Activated CD8-positive, alpha-beta T cell treated with anti-CD3 and anti-CD28 coated beads, Interleukin-2, amount 10 ng/mL, durations not matched to agents 7 days and 5 days (primary cell): ENCODE measurements at regions of chr18 and their contacts with region 1.

Region 1: DNA sequence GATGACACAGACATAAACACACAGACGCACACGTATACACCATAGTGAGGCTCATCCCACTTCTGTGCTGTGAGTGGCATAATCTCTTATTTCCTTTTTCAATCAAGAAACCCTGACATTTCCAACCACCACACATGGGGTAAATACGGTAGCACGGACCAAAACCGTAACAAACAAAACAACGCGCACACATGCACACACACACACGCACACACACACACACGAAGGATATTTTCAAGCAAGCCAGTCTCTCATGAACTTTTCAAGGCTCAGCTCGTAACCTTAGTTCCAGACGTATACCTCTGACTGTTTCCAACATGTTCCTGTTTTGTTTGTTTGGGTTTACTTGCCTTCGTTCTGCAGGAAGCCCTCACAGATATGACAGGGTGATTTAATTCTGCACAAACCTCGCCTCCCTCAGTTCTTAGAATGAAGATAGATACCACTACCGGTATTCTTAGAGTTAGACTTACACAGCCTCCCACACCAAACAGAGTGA is 119.8 kb downstream of the BCL2 start:
- DNase-seq: peak; percentile 78
- ATAC-seq: peak; percentile 80
- H3K4me3 Mint-ChIP-seq: no peak overlapping the region
- H3K27ac Mint-ChIP-seq: no peak overlapping the region
- H3K4me1 Mint-ChIP-seq: peaks cover 49% of the 10 kb centered on the region
- H3K27me3 Mint-ChIP-seq: no peaks in the 10 kb centered on the region

Region 2: DNA sequence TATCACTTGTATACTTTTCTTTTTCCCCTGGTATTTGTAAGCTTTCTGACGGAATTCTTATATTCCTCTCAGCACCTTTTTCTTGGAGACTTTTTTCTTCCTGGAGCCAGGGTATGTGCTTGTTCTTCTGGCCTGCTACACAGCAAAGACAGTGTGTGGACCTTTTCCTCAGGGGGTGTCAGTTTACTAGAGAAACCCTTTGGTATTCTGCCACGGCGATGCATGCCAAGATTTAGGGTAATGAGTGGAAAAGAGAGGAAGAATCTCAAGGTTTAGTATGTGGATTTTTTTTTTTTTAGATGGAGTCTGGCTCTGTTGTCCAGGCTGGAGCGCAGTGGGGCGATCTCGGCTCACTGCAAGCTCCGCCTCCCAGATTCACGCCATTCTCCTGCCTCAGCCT is 332.3 kb before region 1 on chr18:
- CTCF ChIA-PET with region 1: no interaction called
- POLR2A ChIA-PET with region 1: no interaction called
- DNase-seq: no peak
- ATAC-seq: no peak
- H3K4me3 Mint-ChIP-seq: no peak overlapping the region
- H3K27ac Mint-ChIP-seq: no peak overlapping the region
- H3K4me1 Mint-ChIP-seq: peaks cover 25% of the 10 kb centered on the region
- H3K27me3 Mint-ChIP-seq: no peaks in the 10 kb centered on the region

Region 3: GRCh38 chr18:63161761-63162195 is 38.0 kb before region 1 on chr18:
- CTCF ChIA-PET with region 1: interaction called, 27 read pairs
- POLR2A ChIA-PET with region 1: interaction called, 68 read pairs
- DNase-seq: peak; percentile 90
- ATAC-seq: peak; percentile 92
- H3K4me3 Mint-ChIP-seq: peak overlapping the region; percentile 78
- H3K27ac Mint-ChIP-seq: peak overlapping the region; percentile 93
- H3K4me1 Mint-ChIP-seq: peaks cover 93% of the 10 kb centered on the region
- H3K27me3 Mint-ChIP-seq: no peaks in the 10 kb centered on the region

Region 4: DNA sequence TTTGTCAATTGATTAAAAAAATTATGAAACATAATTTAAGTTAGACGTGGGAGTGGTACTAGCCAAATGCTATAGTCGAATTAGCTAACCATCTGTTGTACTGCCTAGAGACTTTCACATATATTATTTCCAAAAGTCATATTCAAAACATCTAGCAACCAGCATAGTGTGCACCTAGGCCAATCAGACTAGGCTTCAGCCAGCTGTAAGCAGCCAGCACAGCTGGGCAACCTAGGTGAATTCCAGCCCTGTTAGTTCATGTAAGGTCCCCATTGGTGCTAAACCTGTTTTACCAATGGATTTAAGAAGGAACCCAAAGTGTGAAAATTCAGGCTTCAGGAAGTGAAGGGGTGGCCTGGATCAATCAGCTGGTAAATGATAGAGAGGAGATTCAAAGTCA is 24.5 kb before region 1 on chr18:
- CTCF ChIA-PET with region 1: no interaction called
- POLR2A ChIA-PET with region 1: no interaction called
- DNase-seq: no peak
- ATAC-seq: no peak
- H3K4me3 Mint-ChIP-seq: no peak overlapping the region
- H3K27ac Mint-ChIP-seq: no peak overlapping the region
- H3K4me1 Mint-ChIP-seq: peaks cover 46% of the 10 kb centered on the region
- H3K27me3 Mint-ChIP-seq: no peaks in the 10 kb centered on the region

Region 5: GRCh38 chr18:63187791-63188460 is 11.9 kb before region 1 on chr18:
- CTCF ChIA-PET with region 1: interaction called, 12 read pairs
- POLR2A ChIA-PET with region 1: interaction called, 7 read pairs
- DNase-seq: no peak
- ATAC-seq: no peak
- H3K4me3 Mint-ChIP-seq: no peak overlapping the region
- H3K27ac Mint-ChIP-seq: no peak overlapping the region
- H3K4me1 Mint-ChIP-seq: peaks cover 68% of the 10 kb centered on the region
- H3K27me3 Mint-ChIP-seq: no peaks in the 10 kb centered on the region

Region 6: GRCh38 chr18:63216516-63217311 is 16.9 kb after region 1 on chr18:
- CTCF ChIA-PET with region 1: interaction called, 21 read pairs
- POLR2A ChIA-PET with region 1: interaction called, 59 read pairs
- DNase-seq: peak; percentile 56
- ATAC-seq: peak; percentile 42
- H3K4me3 Mint-ChIP-seq: peak overlapping the region; percentile 72
- H3K27ac Mint-ChIP-seq: peak overlapping the region; percentile 90
- H3K4me1 Mint-ChIP-seq: peaks cover 98% of the 10 kb centered on the region
- H3K27me3 Mint-ChIP-seq: no peaks in the 10 kb centered on the region